H1 (cell line): ENCODE measurements at regions of chr6 and their contacts with region 1.

Region 1: DNA sequence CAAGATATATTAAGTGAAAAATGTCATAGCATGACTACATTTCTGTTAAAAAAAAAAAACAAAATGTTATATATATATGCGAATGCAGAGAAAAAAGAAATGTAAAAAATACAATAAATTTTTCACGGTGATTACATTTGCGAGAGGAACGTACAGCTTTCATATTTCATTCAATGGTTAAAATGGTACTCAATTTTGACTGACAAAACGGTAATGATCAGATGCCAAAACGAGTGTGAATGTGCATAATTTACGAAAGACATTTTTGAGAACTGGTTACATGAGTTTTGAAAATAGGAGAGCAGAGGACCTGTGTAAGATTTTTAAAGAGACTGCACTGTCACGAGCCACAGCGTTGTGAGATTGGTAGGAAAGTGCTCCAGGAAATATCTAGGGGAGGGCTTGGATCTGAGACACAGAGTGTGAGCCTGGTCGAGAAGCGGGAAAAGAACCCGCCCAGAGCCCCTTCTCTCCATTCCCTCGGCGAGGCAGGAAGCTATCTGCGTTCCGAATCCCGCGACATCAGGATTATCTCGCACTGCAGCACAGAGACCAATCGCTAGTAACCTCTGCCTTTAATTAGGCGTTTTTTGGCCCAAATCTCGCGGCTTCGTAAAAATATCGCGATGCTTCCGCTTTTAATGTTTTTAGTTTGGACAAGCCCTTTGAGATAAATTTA is 28.5 kb downstream of the TRIM27 start:
- DNase-seq: peak; percentile 87
- H3K4me3 ChIP-seq: peak overlapping the region; percentile 81 to 90 (median 84)
- H3K27ac ChIP-seq: peak overlapping the region; percentile 89
- H3K4me1 ChIP-seq: no peaks in the 10 kb centered on the region
- H3K27me3 ChIP-seq: no peaks in the 10 kb centered on the region
- CTCF ChIP-seq: no peak
- EP300 ChIP-seq: no peak
- POLR2A ChIP-seq: peak; percentile 80 to 96
- RAD21 ChIP-seq: no peak

Region 2: DNA sequence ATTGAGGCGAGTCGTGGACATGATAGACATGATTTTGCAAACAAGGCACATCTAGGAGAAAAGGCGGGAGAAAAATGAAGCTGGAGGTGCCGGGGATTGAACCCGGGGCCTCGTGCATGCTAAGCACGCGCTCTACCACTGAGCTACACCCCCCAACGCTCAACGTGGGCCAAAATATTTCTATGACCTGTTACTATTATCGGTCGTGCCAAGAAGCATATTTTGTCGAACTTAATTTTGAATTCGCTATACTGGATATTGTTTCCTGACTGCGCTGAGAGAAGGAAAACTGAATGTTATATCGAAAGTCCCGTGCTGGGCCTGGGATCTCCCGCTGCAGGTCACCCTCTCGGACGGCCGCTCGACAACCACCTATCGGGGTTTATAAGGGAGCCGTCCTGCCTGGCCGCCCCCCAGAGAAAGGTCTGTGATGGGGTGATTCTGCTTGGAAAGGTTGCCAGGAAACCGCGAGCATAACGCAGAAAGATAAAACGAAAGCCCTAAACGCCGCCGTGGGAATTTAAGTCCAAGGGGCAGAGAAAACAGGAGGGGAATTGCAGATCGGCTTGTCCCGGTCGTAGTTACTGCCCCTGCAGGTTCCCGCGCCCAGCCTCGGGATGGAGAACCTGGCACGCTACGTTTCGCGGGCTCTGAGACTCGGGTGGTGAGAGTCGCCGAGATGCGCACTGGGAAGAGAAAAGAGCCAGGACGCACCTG is 31.5 kb before region 1 on chr6:
- CTCF ChIA-PET with region 1: interaction called, 3 read pairs
- POLR2A ChIA-PET with region 1: interaction called, 42 read pairs
- DNase-seq: peak in 1 of 2 experiments; percentile 91
- H3K4me3 ChIP-seq: peak overlapping the region; percentile 89 to 97 (median 92)
- H3K27ac ChIP-seq: no peak overlapping the region
- H3K4me1 ChIP-seq: peaks cover 0 to 4% (median 1%) of the 10 kb centered on the region in 4 experiments; a peak in 3 of 7 replicates
- H3K27me3 ChIP-seq: 0 out of 7 replicates have a peak, but pooled peaks cover 0 to 4% (median 0%) of the 10 kb centered on the region in 4 experiments
- CTCF ChIP-seq: no peak
- EP300 ChIP-seq: no peak
- POLR2A ChIP-seq: 0 out of 3 replicates have a peak, but pooled peaks of 1 of the 2 experiments have one; percentile 25
- RAD21 ChIP-seq: peak in 1 of 2 experiments; percentile 10; a peak in 1 of 4 replicates

Region 3: GRCh38 chr6:28875191-28875747 is 20.0 kb before region 1 on chr6:
- CTCF ChIA-PET with region 1: interaction called, 4 read pairs
- POLR2A ChIA-PET with region 1: interaction called, 18 read pairs
- DNase-seq: no peak
- H3K4me3 ChIP-seq: peak overlapping the region in 1 of 4 experiments; percentile 15; a peak in 1 of 8 replicates
- H3K27ac ChIP-seq: no peak overlapping the region
- H3K4me1 ChIP-seq: peaks cover 1 to 5% (median 4%) of the 10 kb centered on the region in 4 experiments; a peak in 4 of 7 replicates
- H3K27me3 ChIP-seq: no peaks in the 10 kb centered on the region
- CTCF ChIP-seq: no peak
- EP300 ChIP-seq: no peak
- POLR2A ChIP-seq: no peak
- RAD21 ChIP-seq: no peak

Region 4: DNA sequence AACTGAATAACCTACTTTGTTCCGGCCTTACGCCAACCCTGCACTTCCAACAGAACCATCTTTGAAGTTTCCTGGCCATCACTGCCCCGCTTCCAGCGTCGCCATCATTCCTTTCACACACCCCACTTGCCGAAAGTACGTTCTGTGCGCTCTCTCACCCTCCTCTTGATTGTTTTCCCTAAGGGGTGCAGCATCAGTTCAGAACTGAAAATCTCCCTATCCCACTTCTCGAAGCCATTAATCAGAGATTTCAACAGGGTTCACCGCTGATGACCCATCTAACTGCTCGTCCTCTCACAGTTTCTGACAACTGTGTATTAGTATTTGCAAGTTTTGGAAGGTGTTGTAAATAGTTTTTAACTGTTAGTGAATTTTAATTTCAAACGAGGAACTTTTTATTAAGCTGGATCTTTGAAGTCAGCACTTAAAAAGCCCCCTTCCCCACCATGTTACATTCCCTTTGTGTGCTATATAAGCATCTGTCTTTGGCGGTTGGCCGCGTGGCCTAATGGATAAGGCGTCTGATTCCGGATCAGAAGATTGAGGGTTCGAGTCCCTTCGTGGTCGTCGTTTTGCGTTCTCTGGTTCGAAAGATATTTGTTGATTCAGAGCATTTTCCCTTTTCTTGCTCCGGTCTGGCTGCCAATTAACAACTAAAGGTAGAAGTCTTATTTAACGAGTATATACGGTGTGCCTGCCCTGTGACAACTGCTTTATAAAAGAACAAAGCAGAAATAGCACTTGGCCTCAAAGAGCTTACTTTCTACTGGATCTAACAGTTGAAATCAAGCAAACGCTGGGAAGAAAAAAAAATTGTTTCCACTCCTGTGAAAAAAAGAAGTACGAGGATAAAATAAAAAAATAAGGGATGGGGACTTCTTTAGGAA is 14.1 kb before region 1 on chr6:
- CTCF ChIA-PET with region 1: interaction called, 4 read pairs
- POLR2A ChIA-PET with region 1: interaction called, 23 read pairs
- DNase-seq: peak in 1 of 2 experiments; percentile 96
- H3K4me3 ChIP-seq: peak overlapping the region; percentile 84 to 99 (median 86)
- H3K27ac ChIP-seq: peak overlapping the region; percentile 40; the same call in 1 of the 2 replicates
- H3K4me1 ChIP-seq: peaks cover 0 to 4% (median under 1%) of the 10 kb centered on the region in 4 experiments; a peak in 3 of 7 replicates
- H3K27me3 ChIP-seq: no peaks in the 10 kb centered on the region
- CTCF ChIP-seq: no peak
- EP300 ChIP-seq: no peak
- POLR2A ChIP-seq: no peak
- RAD21 ChIP-seq: no peak

Region 5: GRCh38 chr6:28914941-28915340 is 19.7 kb after region 1 on chr6:
- CTCF ChIA-PET with region 1: interaction called, 3 read pairs
- POLR2A ChIA-PET with region 1: interaction called, 10 read pairs
- DNase-seq: no peak
- H3K4me3 ChIP-seq: no peak overlapping the region
- H3K27ac ChIP-seq: no peak overlapping the region
- H3K4me1 ChIP-seq: no peaks in the 10 kb centered on the region
- H3K27me3 ChIP-seq: no peaks in the 10 kb centered on the region
- CTCF ChIP-seq: no peak
- EP300 ChIP-seq: no peak
- POLR2A ChIP-seq: no peak
- RAD21 ChIP-seq: no peak